ENCODE measurements at regions of chr17 and their contacts with region 1.

Region 1: DNA sequence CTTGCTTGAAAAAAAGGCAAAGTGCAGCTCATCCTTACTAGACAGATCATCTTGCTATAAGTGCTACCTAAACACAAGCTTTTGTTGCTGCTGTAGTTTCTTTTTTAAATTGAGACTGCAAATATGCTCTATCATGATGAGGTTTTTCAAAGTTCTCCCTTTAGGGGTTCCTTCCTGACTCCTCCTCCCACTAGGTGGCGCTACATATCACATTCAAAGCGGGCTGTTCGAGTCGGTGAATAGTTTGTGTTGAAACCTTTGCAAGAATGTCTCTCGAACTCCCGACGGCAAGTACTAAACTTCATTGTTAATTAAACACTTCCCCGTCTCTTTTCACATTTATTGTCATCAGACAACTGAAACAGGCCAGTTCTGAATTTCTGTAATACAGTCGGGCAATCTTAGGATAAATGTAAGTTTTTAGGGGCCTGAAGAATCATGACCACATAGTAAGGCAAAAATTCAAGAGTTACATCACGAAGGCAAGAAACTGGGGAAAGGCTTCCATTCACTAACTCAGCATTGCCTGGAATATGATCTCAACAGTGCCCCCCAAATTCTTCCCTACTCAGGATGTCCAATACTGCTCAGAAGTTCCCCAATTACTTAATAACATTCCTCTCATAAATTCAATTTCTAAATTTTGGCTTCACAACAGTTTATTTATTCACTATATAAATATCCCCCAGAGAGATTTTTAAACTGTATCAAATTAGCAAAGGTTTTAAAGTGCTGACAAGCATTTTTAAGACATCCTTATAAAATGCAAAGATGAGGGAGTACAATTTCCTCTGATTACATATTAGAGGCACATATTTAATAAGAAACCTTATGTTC is 6.7 kb downstream of the HS3ST3A1 start:
- DNase-seq: peak; percentile 65
- ATAC-seq: peak; percentile 88
- H3K4me3 ChIP-seq: no peak overlapping the region
- H3K27ac ChIP-seq: no peak overlapping the region
- H3K4me1 ChIP-seq: 0 out of 4 replicates have a peak, but pooled peaks cover 0 to 2% of the 10 kb centered on the region in 2 experiments
- H3K27me3 ChIP-seq: no peaks in the 10 kb centered on the region
- CTCF ChIP-seq: peak; percentile 63 to 96 (median 89); a peak in 5 of 6 replicates
- POLR2A ChIP-seq: no peak
- RAD21 ChIP-seq: peak; percentile 69

Region 2: GRCh38 chr17:13337864-13338371 is 257.1 kb before region 1 on chr17:
- CTCF ChIA-PET with region 1: interaction called, 3 read pairs
- POLR2A ChIA-PET with region 1: no interaction called
- RAD21 ChIA-PET with region 1: no interaction called
- intact Hi-C with region 1: loop called (anchors 5 kb)
- DNase-seq: peak; percentile 54
- ATAC-seq: peak; percentile 79
- H3K4me3 ChIP-seq: peak overlapping the region; percentile 35 to 50
- H3K27ac ChIP-seq: no peak overlapping the region
- H3K4me1 ChIP-seq: peaks cover 0 to 4% of the 10 kb centered on the region in 2 experiments; a peak in 1 of 4 replicates
- H3K27me3 ChIP-seq: no peaks in the 10 kb centered on the region
- CTCF ChIP-seq: peak; percentile 58 to 82 (median 72); a peak in 5 of 6 replicates
- POLR2A ChIP-seq: no peak
- RAD21 ChIP-seq: peak; percentile 77

Region 3: DNA sequence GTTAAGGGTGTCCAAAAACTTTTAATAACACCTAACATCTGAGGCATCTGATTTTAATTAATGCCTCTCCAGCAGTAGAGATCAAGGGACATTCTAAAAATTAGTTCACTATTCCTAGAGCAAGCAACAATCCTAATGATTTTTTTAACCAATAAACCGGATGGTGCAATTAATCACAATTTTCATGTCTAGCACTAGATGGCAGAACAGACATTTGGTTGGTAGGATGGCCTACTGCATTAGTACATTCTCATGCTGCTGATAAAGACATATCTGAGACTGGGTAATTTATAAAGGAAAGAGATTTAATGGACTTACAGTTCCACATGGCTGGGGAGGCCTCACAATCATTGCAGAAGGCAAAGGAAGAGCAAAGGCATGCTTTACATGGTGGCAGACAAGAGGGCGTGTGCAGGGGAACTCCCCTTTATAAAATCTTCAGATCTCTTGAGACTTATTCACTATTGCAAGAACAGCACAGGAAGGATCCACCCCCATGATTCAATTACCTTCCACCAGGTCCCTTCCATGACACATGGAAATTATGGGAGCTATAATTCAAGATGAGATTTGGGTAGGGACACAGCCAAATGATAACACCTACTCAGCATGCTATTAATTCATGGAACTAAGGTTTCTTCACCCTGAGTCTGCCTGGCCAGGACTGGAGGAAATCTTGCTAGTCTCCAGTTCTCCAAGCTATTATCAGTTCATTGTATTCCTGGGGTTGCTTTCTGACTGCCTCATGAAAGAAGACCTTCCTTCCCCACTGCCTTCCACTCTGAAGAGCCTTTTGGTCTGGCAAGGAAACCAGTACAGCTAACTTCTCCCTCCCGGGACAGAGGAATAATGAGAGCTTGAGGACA is 18.1 kb before region 1 on chr17:
- CTCF ChIA-PET with region 1: no interaction called
- POLR2A ChIA-PET with region 1: no interaction called
- RAD21 ChIA-PET with region 1: no interaction called
- intact Hi-C with region 1: no loop called
- DNase-seq: peak; percentile 19
- ATAC-seq: peak; percentile 53
- H3K4me3 ChIP-seq: no peak overlapping the region
- H3K27ac ChIP-seq: no peak overlapping the region
- H3K4me1 ChIP-seq: no peaks in the 10 kb centered on the region
- H3K27me3 ChIP-seq: no peaks in the 10 kb centered on the region
- CTCF ChIP-seq: peak; percentile 7 to 42 (median 20); a peak in 4 of 6 replicates
- POLR2A ChIP-seq: no peak
- RAD21 ChIP-seq: peak; percentile 45

Region 4: GRCh38 chr17:14069251-14070021 is 474.5 kb after region 1 on chr17 and contains the start of gene COX10:
- CTCF ChIA-PET with region 1: no interaction called
- POLR2A ChIA-PET with region 1: no interaction called
- RAD21 ChIA-PET with region 1: no interaction called
- intact Hi-C with region 1: loop called (anchors 10 kb)
- DNase-seq: peak; percentile 73
- ATAC-seq: peak; percentile 99
- H3K4me3 ChIP-seq: peak within 1 kb of the TSS; percentile 96 to 98
- H3K27ac ChIP-seq: peak within 1 kb of the TSS; percentile 85
- H3K4me1 ChIP-seq: peaks cover 12 to 18% of the 10 kb centered on the region in 2 experiments; a peak in 3 of 4 replicates
- H3K27me3 ChIP-seq: no peaks in the 10 kb centered on the region
- CTCF ChIP-seq: no peak
- POLR2A ChIP-seq: no peak
- RAD21 ChIP-seq: no peak
- total RNA-seq, gene COX10: 22.4 TPM

Region 5: DNA sequence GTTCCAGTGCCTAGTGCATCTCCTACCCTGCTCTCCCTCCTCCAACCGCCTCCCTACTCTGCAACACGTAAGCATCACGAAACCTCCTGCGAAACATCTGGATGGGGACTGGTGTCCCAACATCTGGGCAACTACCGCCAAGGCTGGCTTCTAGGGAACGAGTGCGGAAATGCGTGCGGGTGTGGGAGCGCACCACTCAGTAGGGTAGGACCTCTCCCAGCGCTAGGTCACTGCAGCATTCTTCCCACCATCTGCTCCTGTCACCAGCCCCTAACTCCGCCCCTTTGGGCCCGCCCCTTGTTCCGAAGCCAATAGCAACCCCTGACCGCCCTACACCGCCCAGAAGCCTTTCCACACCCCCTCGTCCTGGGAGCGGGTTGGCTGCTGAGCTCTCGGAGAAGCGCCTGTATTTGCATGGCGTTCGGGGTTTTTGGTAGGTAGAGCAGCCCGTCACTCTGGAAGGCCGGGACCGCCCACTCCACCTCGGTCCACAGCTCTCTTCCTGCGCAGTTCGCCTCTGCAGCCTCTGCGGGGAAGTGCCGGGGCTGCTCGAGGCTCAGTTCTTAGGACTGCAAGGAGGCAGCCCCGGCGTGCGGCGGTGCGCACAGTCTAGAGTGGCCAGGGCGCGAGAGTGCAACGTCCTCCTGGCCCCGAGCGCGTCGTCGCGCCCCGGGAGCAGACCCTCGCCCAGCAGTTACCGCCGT is 705.7 kb after region 1 on chr17 and contains the start of gene HS3ST3B1:
- CTCF ChIA-PET with region 1: interaction called, 38 read pairs
- POLR2A ChIA-PET with region 1: interaction called, 5 read pairs
- RAD21 ChIA-PET with region 1: interaction called, 3 to 4 read pairs
- intact Hi-C with region 1: loop called (anchors 1 kb)
- DNase-seq: peak; percentile 96
- ATAC-seq: peak; percentile 96
- H3K4me3 ChIP-seq: peak within 1 kb of the TSS; percentile 45 to 59
- H3K27ac ChIP-seq: peak within 1 kb of the TSS; percentile 55; the same call in 1 of the 2 replicates
- H3K4me1 ChIP-seq: peaks cover 11 to 28% of the 10 kb centered on the region in 2 experiments; a peak in 3 of 4 replicates
- H3K27me3 ChIP-seq: peaks cover 7% of the 10 kb centered on the region; the same call in 1 of the 2 replicates
- CTCF ChIP-seq: no peak
- POLR2A ChIP-seq: peak; percentile 39
- RAD21 ChIP-seq: no peak
- total RNA-seq, gene HS3ST3B1: 2.4 TPM

Region 6: DNA sequence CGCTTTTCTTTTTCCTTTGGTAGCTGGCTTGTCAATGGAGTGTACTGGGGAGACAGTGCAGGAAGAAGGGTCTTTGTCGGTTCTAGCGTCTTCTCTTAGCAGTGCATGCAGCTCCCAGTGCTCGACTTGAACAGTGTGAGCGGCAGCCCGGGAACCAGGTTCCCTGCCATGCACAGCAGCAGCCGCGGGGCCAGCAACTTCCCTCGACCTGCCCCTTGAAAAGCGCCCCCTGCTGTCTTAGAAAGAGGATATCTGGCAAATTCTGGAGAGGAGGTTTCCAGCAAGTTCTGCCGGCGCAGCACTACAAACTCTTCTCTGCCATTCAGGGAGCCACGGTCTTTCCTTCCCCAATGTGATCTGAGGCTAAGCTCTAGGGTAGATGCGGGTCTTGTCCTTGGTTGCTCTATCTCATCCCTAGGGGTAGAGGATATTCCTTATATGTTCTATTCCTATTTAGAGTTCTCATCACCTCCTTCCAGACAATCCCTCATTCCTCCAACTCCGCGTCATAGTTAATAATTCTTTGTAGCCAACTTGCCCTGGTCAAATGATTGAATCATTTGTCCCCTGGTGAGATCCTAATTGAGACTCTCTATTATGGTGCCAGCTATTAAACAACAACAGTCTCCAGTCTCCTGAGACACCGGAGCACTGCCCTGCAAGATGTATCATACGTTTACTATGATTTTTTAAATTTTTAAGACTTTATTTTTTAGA is 1218.8 kb after region 1 on chr17:
- CTCF ChIA-PET with region 1: no interaction called
- POLR2A ChIA-PET with region 1: no interaction called
- RAD21 ChIA-PET with region 1: no interaction called
- intact Hi-C with region 1: loop called (anchors 2 kb)
- DNase-seq: no peak
- ATAC-seq: 0 out of 2 replicates have a peak, but pooled peaks have one; percentile 36
- H3K4me3 ChIP-seq: no peak overlapping the region
- H3K27ac ChIP-seq: no peak overlapping the region
- H3K4me1 ChIP-seq: no peaks in the 10 kb centered on the region
- H3K27me3 ChIP-seq: no peaks in the 10 kb centered on the region
- CTCF ChIP-seq: peak in 2 of 3 experiments; percentile 33 to 34; a peak in 2 of 6 replicates
- POLR2A ChIP-seq: no peak
- RAD21 ChIP-seq: 0 out of 2 replicates have a peak, but pooled peaks have one; percentile 7

Region 7: DNA sequence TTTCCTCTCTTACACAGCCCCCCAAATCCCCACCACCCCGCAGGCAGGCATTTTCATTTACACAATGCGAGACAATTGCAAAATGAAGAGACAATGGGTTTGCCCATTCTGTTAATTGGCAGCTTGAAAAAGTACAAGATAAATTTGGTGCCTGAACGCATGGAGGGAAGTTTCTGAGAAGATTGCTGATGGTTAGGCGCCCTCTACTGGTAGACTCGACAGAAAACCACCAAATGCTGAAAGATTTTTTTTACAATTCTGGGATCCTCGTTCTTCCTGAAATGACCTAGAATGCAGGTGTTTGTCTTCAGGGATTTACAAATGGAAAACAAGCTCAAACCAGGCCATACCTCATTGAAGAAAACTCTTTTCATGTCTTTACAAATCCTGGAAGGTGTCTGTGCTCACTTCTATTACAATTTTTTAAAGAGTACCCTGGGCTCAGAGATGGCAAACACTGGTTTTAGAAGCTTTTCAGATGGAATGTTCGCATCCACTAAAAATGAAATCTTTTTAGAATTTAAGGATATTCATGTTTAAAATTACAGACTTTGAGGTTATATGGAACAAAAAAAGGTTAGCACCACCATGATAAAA is 1331.6 kb after region 1 on chr17:
- CTCF ChIA-PET with region 1: no interaction called
- POLR2A ChIA-PET with region 1: no interaction called
- RAD21 ChIA-PET with region 1: no interaction called
- intact Hi-C with region 1: loop called (anchors 2 kb)
- DNase-seq: peak; percentile 29
- ATAC-seq: no peak
- H3K4me3 ChIP-seq: no peak overlapping the region
- H3K27ac ChIP-seq: no peak overlapping the region
- H3K4me1 ChIP-seq: no peaks in the 10 kb centered on the region
- H3K27me3 ChIP-seq: no peaks in the 10 kb centered on the region
- CTCF ChIP-seq: peak; percentile 43 to 83 (median 65); a peak in 5 of 6 replicates
- POLR2A ChIP-seq: no peak
- RAD21 ChIP-seq: peak; percentile 78

Region 8: GRCh38 chr17:15171167-15172047 is 1576.4 kb after region 1 on chr17:
- CTCF ChIA-PET with region 1: no interaction called
- POLR2A ChIA-PET with region 1: no interaction called
- RAD21 ChIA-PET with region 1: no interaction called
- intact Hi-C with region 1: loop called (anchors 10 kb)
- DNase-seq: peak; percentile 47
- ATAC-seq: peak; percentile 100
- H3K4me3 ChIP-seq: no peak overlapping the region
- H3K27ac ChIP-seq: no peak overlapping the region
- H3K4me1 ChIP-seq: no peaks in the 10 kb centered on the region
- H3K27me3 ChIP-seq: peaks cover 8% of the 10 kb centered on the region; the same call in 1 of the 2 replicates
- CTCF ChIP-seq: peak; percentile 33 to 91 (median 87); a peak in 5 of 6 replicates
- POLR2A ChIP-seq: no peak
- RAD21 ChIP-seq: peak; percentile 75

Measured in HCT116 (cell line).